Right ventricle myocardium superior (tissue), 1 donor: ENCODE measurements at regions of chr3 and their contacts with region 1.

Region 1: GRCh38 chr3:196251918-196252317 is 35.6 kb downstream of the SLC51A start:
- DNase-seq: no peak
- ATAC-seq: no peak

Region 2: GRCh38 chr3:196518966-196519717 is 267.2 kb after region 1 on chr3:
- intact Hi-C with region 1: loop called (anchors 5 kb)
- DNase-seq: peak; percentile 62
- ATAC-seq: peak; percentile 83